PC-9 (cell line): ENCODE measurements at regions of chr7 and their contacts with region 1.

Region 1: GRCh38 chr7:41045556-41046123 is 657.2 kb downstream of the INHBA start:
- DNase-seq: peak; percentile 73 to 80
- H3K4me3 ChIP-seq: no peak overlapping the region
- H3K27ac ChIP-seq: no peak overlapping the region
- H3K4me1 ChIP-seq: peaks cover 19% of the 10 kb centered on the region
- H3K27me3 ChIP-seq: no peaks in the 10 kb centered on the region
- CTCF ChIP-seq: peak; percentile 70

Region 2: GRCh38 chr7:39894904-39895303 is 1150.7 kb before region 1 on chr7:
- CTCF ChIA-PET with region 1: no interaction called
- POLR2A ChIA-PET with region 1: no interaction called
- intact Hi-C with region 1: no loop called
- DNase-seq: no peak
- H3K4me3 ChIP-seq: no peak overlapping the region
- H3K27ac ChIP-seq: no peak overlapping the region
- H3K4me1 ChIP-seq: peaks cover 29% of the 10 kb centered on the region
- H3K27me3 ChIP-seq: no peaks in the 10 kb centered on the region
- CTCF ChIP-seq: no peak

Region 3: DNA sequence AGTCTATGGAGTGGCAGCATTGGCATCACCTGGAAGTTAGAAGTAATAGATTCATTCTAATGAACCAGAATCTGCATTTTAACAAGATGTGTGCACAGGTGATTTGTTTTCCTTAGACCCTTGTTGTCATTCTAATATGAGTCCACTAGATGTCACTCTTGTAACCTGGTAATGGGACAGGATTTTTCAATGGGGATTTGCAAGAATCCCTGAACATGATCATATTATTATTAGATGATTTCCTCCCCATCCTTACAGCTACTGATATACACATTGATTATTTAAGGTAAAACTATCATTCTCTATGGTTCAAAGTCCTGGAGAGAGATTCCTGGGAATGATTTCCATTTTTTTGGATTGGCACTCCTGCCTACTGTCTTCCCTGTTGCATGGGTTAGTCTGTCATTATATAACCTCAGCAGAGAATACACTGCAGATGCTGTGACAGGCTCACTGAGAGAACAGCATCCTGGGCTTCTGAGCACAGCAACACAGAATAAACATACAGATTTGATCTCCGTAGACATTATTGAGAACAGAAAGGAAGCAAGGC is 716.0 kb before region 1 on chr7:
- CTCF ChIA-PET with region 1: interaction called, 6 read pairs
- POLR2A ChIA-PET with region 1: no interaction called
- intact Hi-C with region 1: loop called (anchors 1 kb)
- DNase-seq: peak; percentile 9 to 52
- H3K4me3 ChIP-seq: no peak overlapping the region
- H3K27ac ChIP-seq: no peak overlapping the region
- H3K4me1 ChIP-seq: no peaks in the 10 kb centered on the region; the same call in 1 of the 2 replicates
- H3K27me3 ChIP-seq: no peaks in the 10 kb centered on the region
- CTCF ChIP-seq: peak; percentile 98

Region 4: DNA sequence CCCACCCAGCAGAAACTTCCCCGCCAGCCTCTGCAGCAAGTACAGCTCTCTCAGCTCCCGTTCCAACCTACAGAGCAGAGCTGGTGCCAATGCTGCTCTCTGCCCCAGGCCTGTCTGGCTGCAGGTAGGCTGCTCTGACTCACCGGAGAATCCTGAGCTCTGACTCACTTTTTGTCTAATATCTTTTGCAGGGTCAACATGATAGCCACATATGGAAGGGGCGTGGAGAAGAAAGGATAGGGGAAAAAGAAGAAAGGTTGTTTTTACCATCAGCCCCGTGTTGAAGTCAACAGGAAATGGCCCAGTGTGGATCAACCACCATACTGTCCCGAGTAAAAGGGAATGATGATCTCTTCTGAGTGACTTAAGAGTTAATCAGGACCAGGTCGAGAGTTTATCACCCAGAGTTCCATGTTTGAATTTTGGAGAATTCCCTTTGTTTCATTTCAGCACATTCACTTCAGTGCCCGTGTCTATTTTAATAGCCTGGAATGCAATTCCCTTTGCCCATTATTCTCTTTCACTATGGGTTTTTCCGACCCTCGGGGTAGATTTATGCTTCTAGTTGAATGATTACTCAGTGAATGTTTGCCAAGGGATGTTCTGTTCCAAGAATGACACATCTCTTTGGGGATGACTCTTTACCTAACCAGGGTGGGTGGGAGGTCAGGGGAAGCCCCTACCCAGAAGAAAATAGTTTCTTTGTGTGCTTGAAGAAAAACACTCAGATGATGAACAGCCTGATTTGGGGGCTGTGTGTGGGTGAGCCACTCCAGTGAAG is 62.2 kb after region 1 on chr7:
- CTCF ChIA-PET with region 1: no interaction called
- POLR2A ChIA-PET with region 1: no interaction called
- intact Hi-C with region 1: loop called (anchors 1 kb)
- DNase-seq: peak; percentile 92 to 100
- H3K4me3 ChIP-seq: peak overlapping the region; percentile 45; the same call in 1 of the 2 replicates
- H3K27ac ChIP-seq: peak overlapping the region; percentile 93
- H3K4me1 ChIP-seq: peaks cover 64% of the 10 kb centered on the region
- H3K27me3 ChIP-seq: no peaks in the 10 kb centered on the region
- CTCF ChIP-seq: no peak

Region 5: GRCh38 chr7:41224063-41224806 is 178.6 kb after region 1 on chr7:
- CTCF ChIA-PET with region 1: no interaction called
- POLR2A ChIA-PET with region 1: no interaction called
- intact Hi-C with region 1: loop called (anchors 1 kb)
- DNase-seq: peak; percentile 54 to 100
- H3K4me3 ChIP-seq: no peak overlapping the region
- H3K27ac ChIP-seq: peak overlapping the region; percentile 73
- H3K4me1 ChIP-seq: peaks cover 23% of the 10 kb centered on the region
- H3K27me3 ChIP-seq: no peaks in the 10 kb centered on the region
- CTCF ChIP-seq: no peak

Region 6: DNA sequence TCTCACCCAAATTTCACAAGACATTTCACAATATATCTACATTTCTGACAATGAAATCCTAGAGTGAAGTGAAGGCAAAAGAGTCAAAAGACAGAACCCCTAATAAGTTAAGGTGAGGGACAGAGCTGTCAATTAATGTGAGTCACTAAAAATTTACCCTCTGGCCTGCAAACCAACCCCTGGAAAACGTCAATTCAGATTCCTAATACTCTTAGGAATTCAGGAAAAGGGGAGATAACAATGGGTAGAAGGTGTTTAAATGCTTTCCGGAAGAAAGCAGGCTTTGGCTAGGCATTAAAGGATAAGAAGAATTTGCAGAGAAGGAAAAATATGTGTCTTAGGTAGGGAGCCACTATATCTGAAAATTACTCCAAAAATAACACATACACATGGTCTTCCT is 357.7 kb after region 1 on chr7:
- CTCF ChIA-PET with region 1: interaction called, 15 read pairs
- POLR2A ChIA-PET with region 1: no interaction called
- intact Hi-C with region 1: no loop called
- DNase-seq: peak in 1 of 2 experiments; percentile 72
- H3K4me3 ChIP-seq: no peak overlapping the region
- H3K27ac ChIP-seq: peak overlapping the region; percentile 43
- H3K4me1 ChIP-seq: peaks cover 29% of the 10 kb centered on the region
- H3K27me3 ChIP-seq: no peaks in the 10 kb centered on the region
- CTCF ChIP-seq: no peak

Region 7: DNA sequence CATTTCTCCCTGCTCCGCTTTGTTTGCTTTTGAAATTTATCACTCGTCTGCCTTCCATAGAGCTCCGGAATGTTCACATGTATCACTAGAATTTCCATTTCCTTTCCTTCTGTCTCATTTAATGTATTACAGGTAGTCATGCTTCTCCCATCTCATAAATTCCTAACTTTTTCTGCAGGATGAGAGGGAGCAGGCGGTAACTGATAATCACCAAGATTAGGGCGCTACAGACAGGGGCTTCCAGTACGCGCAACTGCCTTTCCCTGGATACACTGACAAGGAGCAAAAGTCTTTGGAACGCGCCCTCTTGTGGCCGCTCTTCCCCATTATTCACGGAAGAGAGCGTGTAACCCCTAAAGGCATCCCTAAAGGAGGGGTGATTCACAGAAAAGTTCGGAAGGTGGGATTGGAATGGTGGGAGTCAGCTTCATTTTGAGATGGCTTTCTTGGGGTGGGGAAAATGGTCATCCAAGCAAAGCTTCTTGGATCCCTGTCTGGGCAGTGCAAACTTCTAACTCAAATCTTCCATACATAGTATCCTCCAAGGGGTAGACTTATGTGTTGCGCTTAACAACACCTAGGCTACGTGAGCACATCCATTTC is 650.8 kb after region 1 on chr7:
- CTCF ChIA-PET with region 1: interaction called, 13 read pairs
- POLR2A ChIA-PET with region 1: no interaction called
- intact Hi-C with region 1: loop called (anchors 1 kb)
- DNase-seq: peak; percentile 68 to 80
- H3K4me3 ChIP-seq: peak overlapping the region; percentile 19; the same call in 1 of the 2 replicates
- H3K27ac ChIP-seq: no peak overlapping the region
- H3K4me1 ChIP-seq: peaks cover 24% of the 10 kb centered on the region
- H3K27me3 ChIP-seq: no peaks in the 10 kb centered on the region
- CTCF ChIP-seq: peak; percentile 75